Head of caudate nucleus (tissue), 42 donors: ENCODE measurements at regions of chr17 and their contacts with region 1.

Region 1: GRCh38 chr17:79082311-79083190 is 7.9 kb downstream of the ENGASE start:
- DNase-seq: peak in 34 of 42 donors; percentile 27 to 79 (median 52)

Region 2: GRCh38 chr17:79393358-79394202 is 311.0 kb after region 1 on chr17:
- intact Hi-C with region 1: loop called (anchors 5 kb)
- DNase-seq: peak; percentile 52 to 93 (median 84)